ENCODE measurements at regions of chr6 and their contacts with region 1.

Region 1: DNA sequence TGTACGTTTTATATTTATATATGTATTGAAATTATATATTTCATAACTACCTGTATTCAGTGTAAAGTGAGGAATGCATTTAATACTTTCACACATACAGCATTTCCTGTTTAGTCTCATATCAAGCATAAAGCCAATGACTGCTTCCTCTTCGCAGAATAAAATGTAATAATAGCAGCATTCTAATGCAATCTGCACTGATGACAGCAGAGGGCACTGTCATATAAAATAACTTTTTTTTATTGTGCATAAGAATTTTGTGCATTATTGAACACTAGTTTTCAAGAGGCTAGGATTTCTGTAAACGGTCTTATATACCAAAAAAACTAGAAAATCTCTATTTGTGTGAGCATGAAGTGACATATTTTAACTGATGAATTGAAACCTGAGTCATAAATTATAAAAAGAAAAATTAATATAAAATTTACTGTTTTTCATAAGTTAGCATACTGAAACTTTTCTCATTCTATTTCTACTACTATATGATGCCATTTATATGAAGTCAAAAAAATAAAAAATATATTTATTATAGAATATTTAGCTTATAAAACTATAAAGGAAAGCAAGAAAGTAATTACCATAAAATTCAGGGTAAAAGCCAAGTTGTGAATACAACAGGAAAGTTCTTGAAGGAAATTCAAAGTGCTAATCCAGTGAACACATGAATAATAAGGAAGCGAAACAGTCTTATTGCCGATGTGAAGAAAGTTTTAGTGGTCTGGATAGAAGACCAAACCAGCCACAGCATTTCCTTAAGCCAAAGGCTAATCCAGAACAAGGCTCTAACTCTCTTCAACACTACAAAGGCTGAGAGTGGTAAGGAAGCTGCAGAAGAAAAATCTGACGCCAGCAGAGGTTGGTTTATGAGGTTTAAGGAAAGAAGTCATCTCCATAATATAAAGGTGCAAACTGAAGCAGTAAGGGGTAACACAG is 36.3 kb downstream of the RNF146 start:
- DNase-seq: no peak
- ATAC-seq: peak in 3 of 4 donors; percentile 49 to 68 (median 53)
- H3K4me3 ChIP-seq: no peak overlapping the region
- H3K27ac ChIP-seq: no peak overlapping the region
- H3K4me1 ChIP-seq: peaks cover 14% of the 10 kb centered on the region
- H3K27me3 ChIP-seq: no peaks in the 10 kb centered on the region
- CTCF ChIP-seq: peak; percentile 70

Region 2: GRCh38 chr6:127272576-127272975 is 30.4 kb before region 1 on chr6:
- intact Hi-C with region 1: loop called in 1 of 2 experiments (anchors 2 kb)
- DNase-seq: no peak
- ATAC-seq: no peak
- H3K4me3 ChIP-seq: no peak overlapping the region
- H3K27ac ChIP-seq: no peak overlapping the region
- H3K4me1 ChIP-seq: peaks cover 78% of the 10 kb centered on the region
- H3K27me3 ChIP-seq: no peaks in the 10 kb centered on the region
- CTCF ChIP-seq: no peak

Region 3: GRCh38 chr6:127420556-127420955 is 117.6 kb after region 1 on chr6:
- intact Hi-C with region 1: loop called in 1 of 2 experiments (anchors 10 kb)
- DNase-seq: peak in 1 of 2 donors; percentile 25
- ATAC-seq: peak; percentile 90 to 98 (median 98)
- H3K4me3 ChIP-seq: no peak overlapping the region
- H3K27ac ChIP-seq: no peak overlapping the region
- H3K4me1 ChIP-seq: peaks cover 7% of the 10 kb centered on the region
- H3K27me3 ChIP-seq: no peaks in the 10 kb centered on the region
- CTCF ChIP-seq: peak; percentile 33

Region 4: DNA sequence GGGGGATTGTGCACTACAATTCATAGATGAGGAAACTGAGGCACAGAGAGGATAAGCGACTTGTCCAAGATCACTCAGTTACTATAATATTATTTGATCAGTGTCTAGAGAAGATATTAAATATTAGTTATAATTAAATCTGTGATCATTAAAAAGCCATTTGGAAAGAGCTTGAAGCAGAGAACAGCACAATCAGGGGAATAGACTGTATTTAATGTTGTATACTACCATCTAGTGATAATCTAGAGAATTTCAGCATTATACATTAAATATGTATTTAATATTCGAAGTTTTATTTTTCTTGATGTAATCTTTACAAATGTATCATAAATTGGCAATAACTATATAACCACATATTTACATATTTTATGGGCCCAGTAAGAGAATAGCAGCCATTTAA is 236.3 kb after region 1 on chr6:
- intact Hi-C with region 1: loop called (anchors 5 kb)
- DNase-seq: no peak
- ATAC-seq: peak in 3 of 4 donors; percentile 49 to 82 (median 53)
- H3K4me3 ChIP-seq: no peak overlapping the region
- H3K27ac ChIP-seq: no peak overlapping the region
- H3K4me1 ChIP-seq: no peaks in the 10 kb centered on the region
- H3K27me3 ChIP-seq: peaks cover 0 to 4% (median 0%) of the 10 kb centered on the region in 3 donors
- CTCF ChIP-seq: peak; percentile 56